Thyroid gland (tissue), 4 donors: ENCODE measurements at regions of chr2 and their contacts with region 1.

Region 1: GRCh38 chr2:226977775-226978190 is 141.9 kb downstream of the RHBDD1 start:
- DNase-seq: no peak
- H3K4me3 ChIP-seq: no peak overlapping the region
- H3K27ac ChIP-seq: no peak overlapping the region
- H3K4me1 ChIP-seq: no peaks in the 10 kb centered on the region
- H3K27me3 ChIP-seq: no peaks in the 10 kb centered on the region
- CTCF ChIP-seq: no peak
- POLR2A ChIP-seq: no peak

Region 2: DNA sequence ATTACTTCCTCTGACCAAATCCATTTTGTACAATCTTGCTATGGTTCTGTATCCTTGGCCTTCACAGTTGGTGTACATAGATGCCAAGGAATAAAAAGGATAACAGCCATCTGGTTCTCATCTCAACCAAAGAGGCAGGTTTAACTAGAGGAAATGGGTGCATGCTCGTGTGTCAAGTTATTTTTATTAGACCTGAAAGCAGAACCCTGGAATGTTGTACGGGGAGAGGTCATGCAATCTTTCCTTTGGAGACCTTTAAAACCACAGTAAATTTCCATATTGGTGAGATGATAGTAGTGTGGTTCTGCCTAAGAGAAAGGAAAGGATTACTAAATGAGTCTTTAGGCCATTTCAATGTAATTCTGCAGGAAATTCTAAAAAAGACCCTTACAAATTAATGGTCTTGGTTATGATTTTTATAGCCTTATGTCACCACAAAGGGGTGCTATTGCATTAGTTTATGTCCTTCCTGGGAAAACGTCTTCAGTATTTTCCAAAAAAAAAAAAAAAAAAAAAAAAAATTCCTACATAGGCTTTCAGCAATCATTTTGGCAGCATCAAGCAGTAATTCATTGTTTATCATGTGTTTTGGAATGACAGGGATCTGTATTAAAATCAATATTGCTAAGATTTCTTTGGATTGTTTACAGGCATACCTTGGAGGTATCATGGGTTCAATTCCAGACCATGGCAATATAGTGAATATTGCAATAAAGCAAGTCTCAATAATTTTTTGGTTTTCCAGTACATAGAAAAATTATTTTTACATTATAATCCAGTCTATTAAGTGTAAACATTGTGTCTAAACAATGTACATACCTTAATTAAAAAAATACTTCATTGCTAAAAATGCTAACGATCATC is 1307.4 kb before region 1 on chr2:
- intact Hi-C with region 1: loop called (anchors 5 kb)
- DNase-seq: no peak
- H3K4me3 ChIP-seq: no peak overlapping the region
- H3K27ac ChIP-seq: no peak overlapping the region
- H3K4me1 ChIP-seq: no peaks in the 10 kb centered on the region
- H3K27me3 ChIP-seq: no peaks in the 10 kb centered on the region
- CTCF ChIP-seq: peak in 4 of 6 experiments; percentile 20 to 78 (median 48)
- POLR2A ChIP-seq: no peak

Region 3: GRCh38 chr2:226813148-226813701 is 164.6 kb before region 1 on chr2:
- intact Hi-C with region 1: loop called (anchors 5 kb)
- DNase-seq: no peak
- H3K4me3 ChIP-seq: no peak overlapping the region
- H3K27ac ChIP-seq: no peak overlapping the region
- H3K4me1 ChIP-seq: no peaks in the 10 kb centered on the region
- H3K27me3 ChIP-seq: no peaks in the 10 kb centered on the region
- CTCF ChIP-seq: no peak
- POLR2A ChIP-seq: no peak

Region 4: GRCh38 chr2:227335713-227336112 is 357.9 kb after region 1 on chr2:
- intact Hi-C with region 1: no loop called
- DNase-seq: no peak
- H3K4me3 ChIP-seq: no peak overlapping the region
- H3K27ac ChIP-seq: no peak overlapping the region
- H3K4me1 ChIP-seq: no peaks in the 10 kb centered on the region
- H3K27me3 ChIP-seq: no peaks in the 10 kb centered on the region
- CTCF ChIP-seq: no peak
- POLR2A ChIP-seq: no peak

Region 5: GRCh38 chr2:227415538-227416424 is 438.0 kb after region 1 on chr2:
- intact Hi-C with region 1: no loop called
- DNase-seq: no peak
- H3K4me3 ChIP-seq: no peak overlapping the region
- H3K27ac ChIP-seq: no peak overlapping the region
- H3K4me1 ChIP-seq: no peaks in the 10 kb centered on the region
- H3K27me3 ChIP-seq: no peaks in the 10 kb centered on the region
- CTCF ChIP-seq: no peak
- POLR2A ChIP-seq: no peak